Common myeloid progenitor, CD34-positive (primary cell): ENCODE measurements at regions of chr17 and their contacts with region 1.

Region 1: GRCh38 chr17:40287494-40288369 is at the start of gene CDC6:
- DNase-seq: peak; percentile 98 to 100 (median 99)
- H3K4me3 ChIP-seq: peak within 1 kb of the TSS; percentile 80 to 97 (median 88)
- H3K27ac ChIP-seq: peak within 1 kb of the TSS in 1 of 2 experiments; percentile 67
- H3K4me1 ChIP-seq: peaks cover 0 to 16% (median 11%) of the 10 kb centered on the region in 4 experiments
- H3K27me3 ChIP-seq: no peaks in the 10 kb centered on the region

Region 2: DNA sequence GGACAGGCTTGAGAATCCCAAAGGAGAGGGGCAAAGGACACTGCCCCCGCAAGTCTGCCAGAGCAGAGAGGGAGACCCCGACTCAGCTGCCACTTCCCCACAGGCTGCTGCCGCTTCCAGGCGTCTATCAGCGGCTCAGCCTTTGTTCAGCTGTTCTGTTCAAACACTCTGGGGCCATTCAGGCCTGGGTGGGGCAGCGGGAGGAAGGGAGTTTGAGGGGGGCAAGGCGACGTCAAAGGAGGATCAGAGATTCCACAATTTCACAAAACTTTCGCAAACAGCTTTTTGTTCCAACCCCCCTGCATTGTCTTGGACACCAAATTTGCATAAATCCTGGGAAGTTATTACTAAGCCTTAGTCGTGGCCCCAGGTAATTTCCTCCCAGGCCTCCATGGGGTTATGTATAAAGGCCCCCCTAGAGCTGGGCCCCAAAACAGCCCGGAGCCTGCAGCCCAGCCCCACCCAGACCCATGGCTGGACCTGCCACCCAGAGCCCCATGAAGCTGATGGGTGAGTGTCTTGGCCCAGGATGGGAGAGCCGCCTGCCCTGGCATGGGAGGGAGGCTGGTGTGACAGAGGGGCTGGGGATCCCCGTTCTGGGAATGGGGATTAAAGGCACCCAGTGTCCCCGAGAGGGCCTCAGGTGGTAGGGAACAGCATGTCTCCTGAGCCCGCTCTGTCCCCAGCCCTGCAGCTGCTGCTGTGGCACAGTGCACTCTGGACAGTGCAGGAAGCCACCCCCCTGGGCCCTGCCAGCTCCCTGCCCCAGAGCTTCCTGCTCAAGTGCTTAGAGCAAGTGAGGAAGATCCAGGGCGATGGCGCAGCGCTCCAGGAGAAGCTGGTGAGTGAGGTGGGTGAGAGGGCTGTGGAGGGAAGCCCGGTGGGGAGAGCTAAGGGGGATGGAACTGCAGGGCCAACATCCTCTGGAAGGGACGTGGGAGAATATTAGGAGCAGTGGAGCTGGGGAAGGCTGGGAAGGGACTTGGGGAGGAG is 272.4 kb before region 1 on chr17 and contains the start of gene CSF3:
- CTCF ChIA-PET with region 1: interaction called, 12 read pairs
- POLR2A ChIA-PET with region 1: no interaction called
- DNase-seq: peak in 2 of 3 donors; percentile 23 to 26
- H3K4me3 ChIP-seq: peak within 1 kb of the TSS in 1 of 7 experiments; percentile 0
- H3K27ac ChIP-seq: no peak within 1 kb of the TSS
- H3K4me1 ChIP-seq: peaks cover 0 to 13% (median 9%) of the 10 kb centered on the region in 4 experiments
- H3K27me3 ChIP-seq: no peaks in the 10 kb centered on the region

Region 3: GRCh38 chr17:40191237-40192208 is 96.2 kb before region 1 on chr17:
- CTCF ChIA-PET with region 1: interaction called, 142 read pairs
- POLR2A ChIA-PET with region 1: interaction called, 5 read pairs
- DNase-seq: peak; percentile 73 to 78 (median 75)
- H3K4me3 ChIP-seq: peak overlapping the region; percentile 30 to 84 (median 75)
- H3K27ac ChIP-seq: no peak overlapping the region
- H3K4me1 ChIP-seq: peaks cover 0 to 29% (median 12%) of the 10 kb centered on the region in 4 experiments
- H3K27me3 ChIP-seq: peaks cover 0 to 3% (median 0%) of the 10 kb centered on the region in 5 experiments

Region 4: GRCh38 chr17:40209404-40210093 is 78.2 kb before region 1 on chr17:
- CTCF ChIA-PET with region 1: interaction called, 142 read pairs
- POLR2A ChIA-PET with region 1: interaction called, 3 read pairs
- DNase-seq: no peak
- H3K4me3 ChIP-seq: no peak overlapping the region
- H3K27ac ChIP-seq: no peak overlapping the region
- H3K4me1 ChIP-seq: peaks cover 0 to 2% (median 0%) of the 10 kb centered on the region in 4 experiments
- H3K27me3 ChIP-seq: no peaks in the 10 kb centered on the region

Region 5: GRCh38 chr17:40219073-40219860 is 68.5 kb before region 1 on chr17 and contains the start of gene WIPF2:
- CTCF ChIA-PET with region 1: interaction called, 15 read pairs
- POLR2A ChIA-PET with region 1: interaction called, 4 read pairs
- DNase-seq: peak; percentile 98 to 99 (median 98)
- H3K4me3 ChIP-seq: peak within 1 kb of the TSS; percentile 40 to 94 (median 87)
- H3K27ac ChIP-seq: peak within 1 kb of the TSS; percentile 93 to 96
- H3K4me1 ChIP-seq: peaks cover 0 to 12% (median 7%) of the 10 kb centered on the region in 4 experiments
- H3K27me3 ChIP-seq: no peaks in the 10 kb centered on the region

Region 6: GRCh38 chr17:40253565-40253964 is 34.2 kb before region 1 on chr17:
- CTCF ChIA-PET with region 1: no interaction called
- POLR2A ChIA-PET with region 1: no interaction called
- DNase-seq: no peak
- H3K4me3 ChIP-seq: no peak overlapping the region
- H3K27ac ChIP-seq: no peak overlapping the region
- H3K4me1 ChIP-seq: no peaks in the 10 kb centered on the region
- H3K27me3 ChIP-seq: no peaks in the 10 kb centered on the region

Region 7: GRCh38 chr17:40264458-40265185 is 23.1 kb before region 1 on chr17:
- CTCF ChIA-PET with region 1: no interaction called
- POLR2A ChIA-PET with region 1: no interaction called
- DNase-seq: no peak
- H3K4me3 ChIP-seq: no peak overlapping the region
- H3K27ac ChIP-seq: no peak overlapping the region
- H3K4me1 ChIP-seq: no peaks in the 10 kb centered on the region
- H3K27me3 ChIP-seq: no peaks in the 10 kb centered on the region

Region 8: DNA sequence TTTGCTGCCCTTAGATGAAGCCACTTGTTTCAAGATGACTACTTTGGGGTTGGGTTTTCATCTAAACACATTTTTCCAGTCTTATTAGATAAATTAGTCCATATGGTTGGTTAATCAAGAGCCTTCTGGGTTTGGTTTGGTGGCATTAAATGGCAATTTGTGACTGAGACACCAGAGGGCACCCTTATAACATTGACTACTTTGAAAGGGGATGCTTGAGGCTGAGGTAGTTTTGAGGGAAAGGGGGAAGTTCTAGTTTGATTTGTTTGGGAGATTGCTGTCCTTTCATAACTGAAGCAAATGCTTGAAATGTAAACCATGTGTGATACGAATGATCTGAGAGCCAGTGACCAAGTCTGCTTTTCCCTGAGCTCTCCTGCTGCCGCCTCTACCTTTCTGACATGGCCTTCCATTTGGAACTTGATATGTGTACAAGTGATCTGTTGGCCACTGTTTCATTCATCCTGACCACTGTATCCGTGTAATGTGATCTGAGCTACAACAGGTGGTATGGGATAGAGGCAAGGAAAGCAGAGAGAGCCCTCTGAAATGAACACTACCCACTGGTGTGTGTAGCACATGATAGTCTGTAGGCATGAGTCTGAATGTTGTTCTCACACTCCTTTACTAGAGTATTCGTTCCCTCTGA is 15.4 kb after region 1 on chr17:
- CTCF ChIA-PET with region 1: interaction called, 28 read pairs
- POLR2A ChIA-PET with region 1: no interaction called
- DNase-seq: peak; percentile 82 to 88 (median 83)
- H3K4me3 ChIP-seq: no peak overlapping the region
- H3K27ac ChIP-seq: no peak overlapping the region
- H3K4me1 ChIP-seq: peaks cover 16 to 39% (median 26%) of the 10 kb centered on the region in 4 experiments
- H3K27me3 ChIP-seq: no peaks in the 10 kb centered on the region

Region 9: GRCh38 chr17:40328386-40328766 is 40.6 kb after region 1 on chr17:
- CTCF ChIA-PET with region 1: no interaction called
- POLR2A ChIA-PET with region 1: no interaction called
- DNase-seq: no peak
- H3K4me3 ChIP-seq: no peak overlapping the region
- H3K27ac ChIP-seq: no peak overlapping the region
- H3K4me1 ChIP-seq: peaks cover 37 to 100% (median 95%) of the 10 kb centered on the region in 4 experiments
- H3K27me3 ChIP-seq: no peaks in the 10 kb centered on the region

Region 10: GRCh38 chr17:40362696-40363110 is 75.0 kb after region 1 on chr17:
- CTCF ChIA-PET with region 1: interaction called, 1,388 read pairs
- POLR2A ChIA-PET with region 1: no interaction called
- DNase-seq: peak; percentile 74 to 90 (median 88)
- H3K4me3 ChIP-seq: peak overlapping the region; percentile 25 to 75 (median 55)
- H3K27ac ChIP-seq: no peak overlapping the region
- H3K4me1 ChIP-seq: peaks cover 3 to 34% (median 28%) of the 10 kb centered on the region in 4 experiments
- H3K27me3 ChIP-seq: peaks cover 0 to 30% (median 0%) of the 10 kb centered on the region in 5 experiments